H1 (cell line): ENCODE measurements at regions of chr11 and their contacts with region 1.

Region 1: GRCh38 chr11:21866781-21867180 is 326.1 kb upstream of the ANO5 start:
- DNase-seq: no peak
- H3K4me3 ChIP-seq: no peak overlapping the region
- H3K27ac ChIP-seq: no peak overlapping the region
- H3K4me1 ChIP-seq: no peaks in the 10 kb centered on the region
- H3K27me3 ChIP-seq: peaks cover 0 to 4% (median 0%) of the 10 kb centered on the region in 4 experiments; a peak in 1 of 7 replicates
- CTCF ChIP-seq: no peak
- EP300 ChIP-seq: no peak
- POLR2A ChIP-seq: no peak
- RAD21 ChIP-seq: no peak

Region 2: GRCh38 chr11:21888814-21889213 is 22.0 kb after region 1 on chr11:
- CTCF ChIA-PET with region 1: interaction called, 16 read pairs
- POLR2A ChIA-PET with region 1: no interaction called
- DNase-seq: no peak
- H3K4me3 ChIP-seq: no peak overlapping the region
- H3K27ac ChIP-seq: no peak overlapping the region
- H3K4me1 ChIP-seq: no peaks in the 10 kb centered on the region
- H3K27me3 ChIP-seq: no peaks in the 10 kb centered on the region
- CTCF ChIP-seq: no peak
- EP300 ChIP-seq: no peak
- POLR2A ChIP-seq: no peak
- RAD21 ChIP-seq: no peak

Region 3: DNA sequence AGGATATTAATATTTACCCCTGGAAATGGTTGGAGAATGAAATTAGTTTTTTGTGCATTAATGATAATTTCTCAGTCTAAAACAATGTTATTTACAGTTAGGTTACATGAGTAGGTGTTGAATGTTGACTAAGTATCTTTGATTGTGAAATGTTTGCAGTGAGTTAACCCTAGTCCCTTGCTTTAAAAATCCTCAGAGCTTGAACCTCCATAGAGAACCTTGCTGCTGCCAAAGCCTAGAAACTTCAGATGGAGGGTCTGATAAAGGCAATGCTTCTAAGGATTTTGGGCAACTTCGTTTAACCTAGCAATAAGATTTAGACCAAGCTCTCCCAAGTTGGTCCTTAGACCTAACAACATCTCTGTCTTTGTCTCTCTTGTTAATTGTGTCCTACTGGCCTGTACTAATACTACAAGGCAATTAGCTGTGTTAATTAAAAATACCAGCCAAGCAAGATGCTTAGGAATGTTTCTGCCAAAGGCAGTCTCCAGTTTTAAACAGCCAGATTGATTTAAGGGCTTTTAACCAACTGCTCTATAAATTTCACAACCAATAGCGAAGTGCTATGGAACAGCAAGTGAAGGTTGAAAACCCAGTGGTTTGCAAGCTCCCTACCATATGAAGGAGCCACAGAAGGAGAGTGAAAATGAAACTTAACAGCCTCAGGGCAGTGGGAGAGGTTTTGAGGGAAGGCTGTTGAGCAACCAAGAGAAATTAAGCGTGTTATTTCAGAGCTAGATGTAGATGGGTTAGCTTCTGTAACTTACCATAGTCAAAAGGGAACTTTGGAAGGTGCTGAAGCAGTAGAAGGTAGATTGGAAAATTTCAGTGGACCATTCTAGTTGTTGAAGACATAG is 30.2 kb after region 1 on chr11:
- CTCF ChIA-PET with region 1: interaction called, 15 read pairs
- POLR2A ChIA-PET with region 1: no interaction called
- DNase-seq: no peak
- H3K4me3 ChIP-seq: no peak overlapping the region
- H3K27ac ChIP-seq: no peak overlapping the region
- H3K4me1 ChIP-seq: no peaks in the 10 kb centered on the region
- H3K27me3 ChIP-seq: peaks cover 0 to 1% (median 0%) of the 10 kb centered on the region in 4 experiments; a peak in 1 of 7 replicates
- CTCF ChIP-seq: no peak
- EP300 ChIP-seq: no peak
- POLR2A ChIP-seq: no peak
- RAD21 ChIP-seq: no peak